ENCODE measurements at regions of chr7 and their contacts with region 1.

Region 1: GRCh38 chr7:140924019-140924820 is 509 bp downstream of the BRAF start:
- DNase-seq: peak; percentile 55 to 95 (median 75)
- ATAC-seq: peak; percentile 65
- H3K4me3 ChIP-seq: peak overlapping the region; percentile 93
- H3K4me3 Mint-ChIP-seq: no peak overlapping the region
- H3K27ac ChIP-seq: peak overlapping the region; percentile 96 to 97
- H3K27ac Mint-ChIP-seq: no peak overlapping the region
- H3K4me1 ChIP-seq: peaks cover 13% of the 10 kb centered on the region
- H3K4me1 Mint-ChIP-seq: peaks cover 15% of the 10 kb centered on the region
- H3K27me3 ChIP-seq: no peaks in the 10 kb centered on the region
- H3K27me3 Mint-ChIP-seq: no peaks in the 10 kb centered on the region
- CTCF ChIP-seq: no peak

Region 2: DNA sequence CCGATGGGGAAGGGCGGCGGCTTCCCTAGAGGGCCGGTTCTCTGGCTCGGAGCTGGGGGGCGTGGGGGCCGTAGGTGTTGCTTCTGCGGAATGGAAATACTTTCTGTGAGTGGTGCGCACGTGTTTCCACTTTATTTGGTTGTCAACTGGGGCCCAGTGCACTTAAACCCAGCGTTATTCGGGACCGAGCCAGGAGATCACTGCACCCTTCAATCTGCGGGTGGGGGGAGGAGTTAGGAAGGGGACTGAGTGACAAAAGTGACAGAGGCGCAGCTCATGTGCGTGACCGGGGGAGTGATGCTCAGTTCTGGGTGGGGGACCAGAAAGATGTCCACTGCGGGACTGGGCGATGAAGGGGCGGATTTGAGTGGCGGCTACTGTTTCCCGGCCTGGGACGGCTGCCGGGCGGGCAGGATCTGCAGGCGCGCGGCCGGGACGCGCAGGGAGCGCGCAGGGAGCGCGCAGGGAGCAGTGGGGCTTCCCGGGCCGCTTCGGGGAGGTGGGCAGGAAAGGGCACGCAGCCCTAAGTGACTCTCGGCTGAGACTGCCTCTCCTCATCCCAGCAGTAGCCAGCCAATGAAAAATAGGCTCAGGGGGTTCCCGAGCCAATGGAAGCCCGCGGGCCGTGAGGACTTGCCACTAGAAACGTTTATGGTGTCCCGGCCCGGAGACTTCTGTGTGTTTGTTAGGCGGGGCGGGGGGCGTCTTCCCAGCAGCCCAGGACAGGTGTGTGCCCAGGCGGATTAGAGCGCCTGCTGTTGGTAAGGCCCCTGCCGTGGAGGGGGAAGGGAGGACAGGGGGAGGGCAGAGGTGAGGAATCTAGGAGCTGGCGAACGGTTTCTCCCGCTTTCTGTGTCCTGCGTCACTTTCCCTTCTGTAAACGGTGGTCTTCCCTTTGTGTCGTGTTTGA is 693.1 kb before region 1 on chr7:
- CTCF ChIA-PET with region 1: no interaction called
- POLR2A ChIA-PET with region 1: no interaction called
- intact Hi-C with region 1: loop called in 1 of 2 experiments (anchors 5 kb)
- DNase-seq: peak in 8 of 9 experiments; percentile 25 to 80 (median 62)
- ATAC-seq: peak; percentile 19
- H3K4me3 ChIP-seq: peak overlapping the region; percentile 73
- H3K4me3 Mint-ChIP-seq: peak overlapping the region; percentile 92
- H3K27ac ChIP-seq: peak overlapping the region; percentile 83 to 85
- H3K27ac Mint-ChIP-seq: peak overlapping the region; percentile 100
- H3K4me1 ChIP-seq: peaks cover 25% of the 10 kb centered on the region
- H3K4me1 Mint-ChIP-seq: peaks cover 40% of the 10 kb centered on the region
- H3K27me3 ChIP-seq: no peaks in the 10 kb centered on the region
- H3K27me3 Mint-ChIP-seq: no peaks in the 10 kb centered on the region
- CTCF ChIP-seq: no peak

Region 3: GRCh38 chr7:140696680-140697446 is 227.4 kb before region 1 on chr7 and contains the start of gene NDUFB2:
- CTCF ChIA-PET with region 1: no interaction called
- POLR2A ChIA-PET with region 1: no interaction called
- intact Hi-C with region 1: loop called (anchors 1 kb)
- DNase-seq: peak in 8 of 9 experiments; percentile 30 to 85 (median 64)
- ATAC-seq: peak; percentile 87
- H3K4me3 ChIP-seq: peak within 1 kb of the TSS; percentile 96 to 100
- H3K4me3 Mint-ChIP-seq: peak within 1 kb of the TSS; percentile 97
- H3K27ac ChIP-seq: peak within 1 kb of the TSS; percentile 96
- H3K27ac Mint-ChIP-seq: peak within 1 kb of the TSS; percentile 99
- H3K4me1 ChIP-seq: peaks cover 19% of the 10 kb centered on the region
- H3K4me1 Mint-ChIP-seq: peaks cover 45% of the 10 kb centered on the region
- H3K27me3 ChIP-seq: no peaks in the 10 kb centered on the region
- H3K27me3 Mint-ChIP-seq: no peaks in the 10 kb centered on the region
- CTCF ChIP-seq: no peak
- total RNA-seq, gene NDUFB2: 83.9 to 84.5 TPM

Region 4: DNA sequence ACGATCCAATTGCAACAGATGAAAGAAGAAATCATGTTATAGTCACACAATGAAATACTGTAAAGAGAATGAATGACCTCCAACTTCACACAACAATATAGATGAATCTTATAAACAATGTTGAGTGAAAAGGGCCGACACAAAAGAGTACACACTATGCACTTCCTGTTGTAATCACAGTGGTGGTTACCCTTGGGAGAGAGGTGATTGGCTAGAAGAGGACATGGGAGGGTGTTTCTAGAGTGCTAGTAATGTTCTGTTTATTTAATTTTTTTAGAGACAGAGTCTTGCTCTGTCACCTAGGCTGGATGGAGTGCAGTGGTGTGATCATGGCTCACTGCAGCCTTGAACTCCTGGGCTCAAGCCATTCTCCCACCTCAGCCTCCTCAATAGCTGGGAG is 145.2 kb before region 1 on chr7:
- CTCF ChIA-PET with region 1: no interaction called
- POLR2A ChIA-PET with region 1: no interaction called
- intact Hi-C with region 1: no loop called
- DNase-seq: peak in 2 of 9 experiments; percentile 3 to 11
- ATAC-seq: peak; percentile 57
- H3K4me3 ChIP-seq: no peak overlapping the region
- H3K4me3 Mint-ChIP-seq: no peak overlapping the region
- H3K27ac ChIP-seq: no peak overlapping the region
- H3K27ac Mint-ChIP-seq: no peak overlapping the region
- H3K4me1 ChIP-seq: no peaks in the 10 kb centered on the region
- H3K4me1 Mint-ChIP-seq: peaks cover 4% of the 10 kb centered on the region
- H3K27me3 ChIP-seq: no peaks in the 10 kb centered on the region
- H3K27me3 Mint-ChIP-seq: no peaks in the 10 kb centered on the region
- CTCF ChIP-seq: no peak

Region 5: GRCh38 chr7:140828741-140829140 is 95.5 kb before region 1 on chr7:
- CTCF ChIA-PET with region 1: no interaction called
- POLR2A ChIA-PET with region 1: no interaction called
- intact Hi-C with region 1: loop called in 1 of 2 experiments (anchors 5 kb)
- DNase-seq: no peak
- ATAC-seq: no peak
- H3K4me3 ChIP-seq: no peak overlapping the region
- H3K4me3 Mint-ChIP-seq: no peak overlapping the region
- H3K27ac ChIP-seq: no peak overlapping the region
- H3K27ac Mint-ChIP-seq: no peak overlapping the region
- H3K4me1 ChIP-seq: no peaks in the 10 kb centered on the region
- H3K4me1 Mint-ChIP-seq: no peaks in the 10 kb centered on the region
- H3K27me3 ChIP-seq: no peaks in the 10 kb centered on the region
- H3K27me3 Mint-ChIP-seq: no peaks in the 10 kb centered on the region
- CTCF ChIP-seq: no peak

Region 6: DNA sequence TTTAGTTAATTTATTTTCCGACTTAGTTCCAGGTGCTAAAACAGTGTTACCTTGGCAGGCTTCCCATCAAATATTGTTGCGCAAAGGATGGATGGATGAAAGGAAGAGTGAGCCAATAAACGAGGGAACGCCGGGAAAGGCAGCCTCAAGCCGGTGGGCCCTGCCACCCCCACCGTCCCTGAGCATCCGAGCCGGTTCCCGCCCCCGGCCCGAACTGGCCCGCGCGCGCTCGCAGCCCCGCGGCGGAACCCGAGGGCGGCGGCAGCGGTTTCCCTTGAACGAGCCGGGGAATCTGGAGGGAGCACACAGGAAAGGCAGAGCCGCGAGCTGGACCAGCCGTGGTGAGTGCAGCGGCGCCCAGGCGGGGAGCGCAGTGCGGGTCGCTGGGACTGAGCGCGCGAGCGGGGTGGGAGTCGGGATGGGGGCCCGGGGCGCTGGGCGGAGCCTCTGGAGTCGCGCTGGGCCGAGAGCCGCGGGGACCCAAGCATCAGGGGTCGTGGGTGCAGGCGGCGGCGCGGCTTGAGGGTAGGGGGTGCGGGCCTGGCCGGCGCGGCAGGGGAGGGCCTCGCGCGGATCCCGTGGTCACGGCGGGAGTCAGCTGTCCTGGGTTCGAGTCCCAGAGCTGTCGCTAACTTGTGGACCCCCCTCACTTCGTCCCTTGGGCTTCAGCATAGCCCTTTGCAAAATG is 627.0 kb after region 1 on chr7 and contains the start of gene AGK:
- CTCF ChIA-PET with region 1: no interaction called
- POLR2A ChIA-PET with region 1: no interaction called
- intact Hi-C with region 1: loop called (anchors 5 to 10 kb)
- DNase-seq: peak; percentile 55 to 86 (median 72)
- ATAC-seq: peak; percentile 96
- H3K4me3 ChIP-seq: peak within 1 kb of the TSS; percentile 68 to 82
- H3K4me3 Mint-ChIP-seq: peak within 1 kb of the TSS; percentile 93
- H3K27ac ChIP-seq: peak within 1 kb of the TSS; percentile 34 to 50
- H3K27ac Mint-ChIP-seq: peak within 1 kb of the TSS; percentile 89
- H3K4me1 ChIP-seq: peaks cover 18% of the 10 kb centered on the region
- H3K4me1 Mint-ChIP-seq: peaks cover 31% of the 10 kb centered on the region
- H3K27me3 ChIP-seq: no peaks in the 10 kb centered on the region
- H3K27me3 Mint-ChIP-seq: no peaks in the 10 kb centered on the region
- CTCF ChIP-seq: no peak
- total RNA-seq, gene AGK: 20.5 to 22.6 TPM

Measured in CD8-positive, alpha-beta T cell (primary cell).